Sciatic nerve (tissue), 2 donors: ENCODE measurements at regions of chrX and their contacts with region 1.

Region 1: DNA sequence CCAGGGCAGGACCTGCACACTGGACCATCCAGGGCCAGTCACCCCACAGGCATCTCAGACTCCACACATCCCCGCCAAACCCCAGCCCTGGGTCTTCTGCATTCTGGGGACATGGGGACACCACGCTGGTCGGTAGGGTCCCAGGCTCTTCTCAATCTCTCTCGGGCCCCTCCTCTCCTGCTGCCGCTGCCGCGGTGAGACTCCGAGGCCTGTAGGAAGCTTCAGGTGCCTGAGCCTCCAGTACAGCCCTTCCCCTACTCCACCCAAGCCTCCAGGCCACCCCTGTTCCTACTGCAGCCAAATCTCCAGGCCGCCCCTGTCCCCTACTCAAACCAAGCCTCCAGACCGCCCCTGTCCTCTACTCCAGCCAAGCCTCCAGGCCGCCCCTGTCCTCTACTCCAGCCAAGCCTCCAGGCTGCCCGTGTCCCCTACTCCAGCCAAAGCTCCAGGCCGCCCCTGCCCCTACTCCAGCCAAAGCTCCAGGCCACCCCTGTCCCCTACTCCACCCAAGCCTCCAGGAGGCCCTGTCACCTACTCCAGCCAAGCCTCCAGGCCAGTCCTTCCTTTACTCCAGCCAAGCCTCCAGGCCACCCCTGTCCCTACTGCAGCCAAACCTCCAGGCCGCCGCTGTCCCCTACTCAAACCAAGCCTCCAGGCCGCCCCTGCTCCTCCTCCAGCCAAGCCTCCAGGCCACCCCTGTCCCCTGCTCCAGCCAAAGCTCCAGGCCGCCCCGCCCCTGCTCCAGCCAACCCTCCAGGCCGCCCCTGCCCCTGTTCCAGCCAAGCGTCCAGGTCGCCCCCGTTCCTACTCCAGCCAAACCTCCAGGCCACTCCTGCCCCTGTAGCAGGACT is 5.3 kb upstream of the ASMT start:
- DNase-seq: no peak
- ATAC-seq: peak; percentile 59

Region 2: GRCh38 chrX:2801223-2801622 is 1191.7 kb after region 1 on chrX:
- intact Hi-C with region 1: loop called (anchors 10 kb)
- DNase-seq: no peak
- ATAC-seq: no peak